ENCODE measurements at regions of chr12 and their contacts with region 1.

Region 1: GRCh38 chr12:33304176-33304575 is 135.4 kb downstream of the SYT10 start:
- DNase-seq: no peak
- H3K4me3 ChIP-seq: no peak overlapping the region
- H3K27ac ChIP-seq: no peak overlapping the region
- H3K4me1 ChIP-seq: no peaks in the 10 kb centered on the region
- H3K27me3 ChIP-seq: no peaks in the 10 kb centered on the region
- CTCF ChIP-seq: no peak

Region 2: GRCh38 chr12:33614630-33615029 is 310.5 kb after region 1 on chr12:
- CTCF ChIA-PET with region 1: no interaction called
- dilution Hi-C with region 1: no loop called
- in situ Hi-C with region 1: no loop called
- intact Hi-C with region 1: loop called (anchors 5 kb)
- DNase-seq: no peak
- H3K4me3 ChIP-seq: no peak overlapping the region
- H3K27ac ChIP-seq: no peak overlapping the region
- H3K4me1 ChIP-seq: no peaks in the 10 kb centered on the region
- H3K27me3 ChIP-seq: no peaks in the 10 kb centered on the region
- CTCF ChIP-seq: no peak